Naive thymus-derived CD4-positive, alpha-beta T cell (primary cell): ENCODE measurements at regions of chr1 and their contacts with region 1.

Region 1: DNA sequence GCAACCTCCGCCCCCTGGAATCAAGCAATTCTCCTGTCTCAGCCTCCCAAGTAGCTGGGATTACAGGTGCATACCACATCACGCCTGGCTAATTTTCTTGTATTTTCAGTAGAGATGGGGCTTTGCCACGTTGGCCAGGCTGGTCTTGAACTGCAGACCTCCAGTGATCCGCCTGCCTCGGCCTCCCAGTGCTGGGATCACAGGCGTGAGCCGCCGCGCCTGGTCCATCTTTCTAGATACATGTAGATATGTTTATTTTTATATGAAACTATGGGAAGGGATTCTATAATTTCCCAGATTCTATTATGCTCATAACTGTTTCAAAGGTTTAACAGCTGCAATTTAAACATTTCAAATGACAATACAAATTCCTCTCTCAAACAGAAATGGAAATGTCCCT is 27.1 kb downstream of the CLCC1 start:
- DNase-seq: no peak
- ATAC-seq: no peak
- H3K4me3 ChIP-seq: no peak overlapping the region
- H3K4me3 Mint-ChIP-seq: no peak overlapping the region
- H3K27ac ChIP-seq: no peak overlapping the region
- H3K27ac Mint-ChIP-seq: peak overlapping the region in 1 of 9 donors; percentile 4
- H3K4me1 ChIP-seq: no peaks in the 10 kb centered on the region
- H3K4me1 Mint-ChIP-seq: no peaks in the 10 kb centered on the region
- H3K27me3 ChIP-seq: no peaks in the 10 kb centered on the region
- H3K27me3 Mint-ChIP-seq: no peaks in the 10 kb centered on the region

Region 2: DNA sequence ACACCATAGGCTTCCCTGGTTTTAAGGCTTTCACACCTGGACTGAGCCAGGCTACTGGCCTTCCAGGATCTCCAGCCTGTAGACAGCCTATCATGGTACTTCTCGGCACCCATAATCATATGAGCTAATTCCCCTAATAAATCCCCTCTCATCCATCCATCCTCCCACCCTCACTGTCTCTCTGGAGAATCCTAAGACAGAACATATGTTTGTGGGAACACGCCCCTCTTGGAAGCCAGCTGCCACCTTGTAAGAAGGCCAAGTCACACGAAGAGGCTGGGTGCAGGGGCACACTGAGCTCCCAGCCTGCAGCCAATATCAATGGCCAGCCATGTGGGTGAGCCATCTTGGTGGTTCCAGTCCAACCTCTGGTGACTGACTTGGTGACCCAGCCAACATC is 19.7 kb after region 1 on chr1:
- CTCF ChIA-PET with region 1: no interaction called
- POLR2A ChIA-PET with region 1: no interaction called
- intact Hi-C with region 1: loop called in 1 of 2 experiments (anchors 2 kb)
- DNase-seq: no peak
- ATAC-seq: no peak
- H3K4me3 ChIP-seq: no peak overlapping the region
- H3K4me3 Mint-ChIP-seq: peak overlapping the region in 7 of 10 donors; percentile 3 to 75 (median 51)
- H3K27ac ChIP-seq: no peak overlapping the region
- H3K27ac Mint-ChIP-seq: peak overlapping the region in 8 of 9 donors; percentile 22 to 94 (median 87)
- H3K4me1 ChIP-seq: peaks cover 18 to 21% of the 10 kb centered on the region in 2 donors
- H3K4me1 Mint-ChIP-seq: peaks cover 39 to 66% (median 51%) of the 10 kb centered on the region in 7 donors
- H3K27me3 ChIP-seq: no peaks in the 10 kb centered on the region
- H3K27me3 Mint-ChIP-seq: peaks cover 0 to 15% (median 0%) of the 10 kb centered on the region in 5 donors

Region 3: DNA sequence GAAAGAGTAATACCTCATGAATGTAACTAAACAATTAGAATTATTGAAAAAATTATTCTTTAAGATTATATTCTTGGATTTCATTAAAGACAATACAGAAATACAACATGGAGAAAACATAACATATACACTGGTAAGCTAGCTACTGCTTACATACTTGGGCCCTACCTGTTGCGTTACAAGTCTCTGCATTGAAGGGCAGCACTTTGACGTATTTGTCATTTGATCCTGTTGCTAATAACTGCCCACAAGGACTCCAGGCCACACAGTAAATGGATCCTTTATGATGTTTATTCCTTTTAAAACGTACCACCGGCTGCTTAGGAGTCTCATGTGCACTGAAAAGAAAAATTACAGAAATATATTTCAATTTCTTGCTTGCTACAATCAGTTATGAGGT is 46.9 kb after region 1 on chr1:
- CTCF ChIA-PET with region 1: no interaction called
- POLR2A ChIA-PET with region 1: no interaction called
- intact Hi-C with region 1: no loop called
- DNase-seq: no peak
- ATAC-seq: no peak
- H3K4me3 ChIP-seq: no peak overlapping the region
- H3K4me3 Mint-ChIP-seq: no peak overlapping the region
- H3K27ac ChIP-seq: no peak overlapping the region
- H3K27ac Mint-ChIP-seq: no peak overlapping the region
- H3K4me1 ChIP-seq: no peaks in the 10 kb centered on the region
- H3K4me1 Mint-ChIP-seq: no peaks in the 10 kb centered on the region
- H3K27me3 ChIP-seq: no peaks in the 10 kb centered on the region
- H3K27me3 Mint-ChIP-seq: no peaks in the 10 kb centered on the region